ENCODE measurements at regions of chr7 and their contacts with region 1.

Region 1: DNA sequence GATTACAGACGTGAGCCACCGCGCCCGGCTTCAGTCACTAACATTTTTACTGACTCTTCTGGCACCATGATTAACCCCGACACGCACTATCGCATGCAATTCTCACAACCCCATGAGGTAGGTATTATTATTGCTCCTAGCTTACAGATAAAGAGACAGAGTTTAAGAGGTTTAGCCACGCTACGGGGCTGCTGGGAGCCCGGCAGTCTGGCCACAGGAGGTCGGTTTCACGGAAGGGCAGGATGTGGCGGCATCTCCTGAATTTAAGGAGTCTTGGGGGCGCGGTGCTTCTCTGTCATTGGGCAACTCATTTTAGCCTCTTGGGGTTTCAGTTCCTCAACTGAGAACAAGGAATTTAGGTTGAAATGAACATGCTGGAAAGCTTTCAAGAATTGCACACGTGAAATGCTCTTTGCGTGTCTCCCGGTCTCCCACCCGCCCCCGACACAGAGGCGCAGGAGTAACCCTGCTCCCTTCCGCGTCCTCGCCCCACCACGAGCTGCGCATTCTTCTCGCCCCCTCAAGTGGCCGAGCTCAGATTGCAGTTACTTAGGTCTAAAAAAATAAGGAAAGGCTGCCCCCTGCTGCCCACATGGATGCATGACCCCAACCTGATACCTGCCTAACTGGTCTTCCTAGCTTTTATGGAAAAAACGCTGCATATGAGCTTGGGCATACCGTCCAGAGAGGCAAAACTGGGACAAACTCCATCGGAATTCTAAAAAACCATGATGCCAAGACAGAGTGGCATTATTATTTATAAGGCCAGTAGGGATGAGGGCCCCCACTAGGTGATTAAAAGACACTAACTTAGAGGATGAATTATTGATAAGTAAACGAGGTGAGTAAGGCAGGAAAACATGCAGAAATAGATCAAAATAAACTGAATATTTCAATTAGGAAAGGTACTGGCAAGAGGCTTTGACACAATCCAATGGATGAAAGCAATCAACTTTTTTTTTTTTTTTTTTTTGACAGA is 12.4 kb downstream of the PRSS2 start:
- DNase-seq: peak; percentile 74 to 91
- ATAC-seq: peak; percentile 87 to 95
- H3K4me3 ChIP-seq: peak overlapping the region; percentile 34; the same call in 2 of the 3 replicates
- H3K27ac ChIP-seq: no peak overlapping the region
- H3K4me1 ChIP-seq: 0 out of 3 replicates have a peak, but pooled peaks cover 4% of the 10 kb centered on the region
- CTCF ChIP-seq: peak; percentile 98
- EP300 ChIP-seq: no peak
- POLR2A ChIP-seq: no peak
- RAD21 ChIP-seq: peak; percentile 94 to 96

Region 2: GRCh38 chr7:142496545-142497041 is 286.6 kb before region 1 on chr7:
- CTCF ChIA-PET with region 1: interaction called, 23 read pairs
- POLR2A ChIA-PET with region 1: no interaction called
- DNase-seq: peak in 1 of 2 experiments; percentile 39
- ATAC-seq: peak; percentile 75 to 88; a peak in 4 of 6 replicates
- H3K4me3 ChIP-seq: no peak overlapping the region
- H3K27ac ChIP-seq: no peak overlapping the region
- H3K4me1 ChIP-seq: no peaks in the 10 kb centered on the region
- CTCF ChIP-seq: peak; percentile 60
- EP300 ChIP-seq: no peak
- POLR2A ChIP-seq: no peak
- RAD21 ChIP-seq: peak; percentile 39 to 54; a peak in 4 of 5 replicates

Region 3: DNA sequence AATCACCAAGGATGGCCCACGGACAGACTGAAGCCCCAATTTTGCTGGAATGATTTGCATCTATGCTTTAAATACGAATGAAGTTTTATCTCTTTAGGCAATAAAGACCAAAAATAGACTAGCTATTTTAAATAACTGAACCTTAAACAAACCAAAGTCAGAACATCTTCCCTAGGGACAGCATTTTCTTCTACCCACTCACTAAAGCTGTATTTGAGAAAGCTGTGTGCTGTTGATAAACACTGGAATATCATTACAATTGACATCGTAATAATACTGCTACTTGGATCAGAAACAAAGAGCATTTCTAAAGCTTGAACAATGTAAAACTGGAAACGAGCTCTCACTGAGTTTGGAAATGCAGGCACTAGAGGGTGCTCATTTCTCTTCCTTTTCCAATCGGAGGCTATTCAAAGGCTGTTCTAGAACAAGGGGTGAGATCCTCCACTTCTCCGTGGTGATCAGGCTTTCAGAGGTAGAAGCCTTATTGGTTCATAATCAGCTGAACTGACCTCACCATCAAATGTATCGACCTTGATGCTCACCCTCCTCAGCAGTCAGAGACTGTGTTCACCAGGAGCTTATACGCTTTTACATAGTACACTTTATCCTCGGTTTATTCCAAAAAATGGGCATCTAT is 259.3 kb before region 1 on chr7:
- CTCF ChIA-PET with region 1: interaction called, 34 read pairs
- POLR2A ChIA-PET with region 1: no interaction called
- DNase-seq: no peak
- ATAC-seq: peak in 1 of 2 experiments; percentile 47; a peak in 2 of 6 replicates
- H3K4me3 ChIP-seq: no peak overlapping the region
- H3K27ac ChIP-seq: no peak overlapping the region
- H3K4me1 ChIP-seq: no peaks in the 10 kb centered on the region
- CTCF ChIP-seq: no peak; the same call in 2 of the 3 replicates
- EP300 ChIP-seq: no peak
- POLR2A ChIP-seq: no peak
- RAD21 ChIP-seq: no peak

Region 4: GRCh38 chr7:142603870-142604448 is 179.3 kb before region 1 on chr7:
- CTCF ChIA-PET with region 1: interaction called, 28 read pairs
- POLR2A ChIA-PET with region 1: no interaction called
- DNase-seq: peak; percentile 57 to 66
- ATAC-seq: peak; percentile 43 to 65; a peak in 5 of 6 replicates
- H3K4me3 ChIP-seq: no peak overlapping the region; the same call in 2 of the 3 replicates
- H3K27ac ChIP-seq: no peak overlapping the region
- H3K4me1 ChIP-seq: no peaks in the 10 kb centered on the region
- CTCF ChIP-seq: peak; percentile 86
- EP300 ChIP-seq: no peak
- POLR2A ChIP-seq: no peak
- RAD21 ChIP-seq: peak; percentile 79 to 80

Region 5: GRCh38 chr7:142632291-142633134 is 150.7 kb before region 1 on chr7:
- CTCF ChIA-PET with region 1: interaction called, 66 read pairs
- POLR2A ChIA-PET with region 1: interaction called, 5 read pairs
- DNase-seq: peak; percentile 65 to 71
- ATAC-seq: peak; percentile 89 to 97
- H3K4me3 ChIP-seq: no peak overlapping the region
- H3K27ac ChIP-seq: no peak overlapping the region
- H3K4me1 ChIP-seq: no peaks in the 10 kb centered on the region
- CTCF ChIP-seq: peak; percentile 81
- EP300 ChIP-seq: no peak
- POLR2A ChIP-seq: no peak
- RAD21 ChIP-seq: peak; percentile 70 to 77

Region 6: GRCh38 chr7:142760071-142760642 is 23.1 kb before region 1 on chr7:
- CTCF ChIA-PET with region 1: interaction called, 15 read pairs
- POLR2A ChIA-PET with region 1: no interaction called
- DNase-seq: no peak
- ATAC-seq: no peak
- H3K4me3 ChIP-seq: no peak overlapping the region
- H3K27ac ChIP-seq: no peak overlapping the region
- H3K4me1 ChIP-seq: no peaks in the 10 kb centered on the region
- CTCF ChIP-seq: no peak
- EP300 ChIP-seq: no peak
- POLR2A ChIP-seq: no peak
- RAD21 ChIP-seq: no peak

Region 7: DNA sequence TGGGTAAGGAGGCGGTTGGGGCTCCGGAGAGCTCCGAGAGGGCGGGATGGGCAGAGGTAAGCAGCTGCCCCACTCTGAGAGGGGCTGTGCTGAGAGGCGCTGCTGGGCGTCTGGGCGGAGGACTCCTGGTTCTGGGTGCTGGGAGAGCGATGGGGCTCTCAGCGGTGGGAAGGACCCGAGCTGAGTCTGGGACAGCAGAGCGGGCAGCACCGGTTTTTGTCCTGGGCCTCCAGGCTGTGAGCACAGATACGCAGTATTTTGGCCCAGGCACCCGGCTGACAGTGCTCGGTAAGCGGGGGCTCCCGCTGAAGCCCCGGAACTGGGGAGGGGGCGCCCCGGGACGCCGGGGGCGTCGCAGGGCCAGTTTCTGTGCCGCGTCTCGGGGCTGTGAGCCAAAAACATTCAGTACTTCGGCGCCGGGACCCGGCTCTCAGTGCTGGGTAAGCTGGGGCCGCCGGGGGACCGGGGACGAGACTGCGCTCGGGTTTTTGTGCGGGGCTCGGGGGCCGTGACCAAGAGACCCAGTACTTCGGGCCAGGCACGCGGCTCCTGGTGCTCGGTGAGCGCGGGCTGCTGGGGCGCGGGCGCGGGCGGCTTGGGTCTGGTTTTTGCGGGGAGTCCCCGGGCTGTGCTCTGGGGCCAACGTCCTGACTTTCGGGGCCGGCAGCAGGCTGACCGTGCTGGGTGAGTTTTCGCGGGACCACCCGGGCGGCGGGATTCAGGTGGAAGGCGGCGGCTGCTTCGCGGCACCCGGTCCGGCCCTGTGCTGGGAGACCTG is 13.6 kb after region 1 on chr7:
- CTCF ChIA-PET with region 1: interaction called, 21 read pairs
- POLR2A ChIA-PET with region 1: no interaction called
- DNase-seq: no peak
- ATAC-seq: peak in 1 of 2 experiments; percentile 43; a peak in 3 of 6 replicates
- H3K4me3 ChIP-seq: no peak overlapping the region
- H3K27ac ChIP-seq: no peak overlapping the region
- H3K4me1 ChIP-seq: no peaks in the 10 kb centered on the region
- CTCF ChIP-seq: no peak
- EP300 ChIP-seq: no peak
- POLR2A ChIP-seq: no peak
- RAD21 ChIP-seq: no peak

Measured in A549 (cell line).